ENCODE measurements at regions of chr20 and their contacts with region 1.

Region 1: DNA sequence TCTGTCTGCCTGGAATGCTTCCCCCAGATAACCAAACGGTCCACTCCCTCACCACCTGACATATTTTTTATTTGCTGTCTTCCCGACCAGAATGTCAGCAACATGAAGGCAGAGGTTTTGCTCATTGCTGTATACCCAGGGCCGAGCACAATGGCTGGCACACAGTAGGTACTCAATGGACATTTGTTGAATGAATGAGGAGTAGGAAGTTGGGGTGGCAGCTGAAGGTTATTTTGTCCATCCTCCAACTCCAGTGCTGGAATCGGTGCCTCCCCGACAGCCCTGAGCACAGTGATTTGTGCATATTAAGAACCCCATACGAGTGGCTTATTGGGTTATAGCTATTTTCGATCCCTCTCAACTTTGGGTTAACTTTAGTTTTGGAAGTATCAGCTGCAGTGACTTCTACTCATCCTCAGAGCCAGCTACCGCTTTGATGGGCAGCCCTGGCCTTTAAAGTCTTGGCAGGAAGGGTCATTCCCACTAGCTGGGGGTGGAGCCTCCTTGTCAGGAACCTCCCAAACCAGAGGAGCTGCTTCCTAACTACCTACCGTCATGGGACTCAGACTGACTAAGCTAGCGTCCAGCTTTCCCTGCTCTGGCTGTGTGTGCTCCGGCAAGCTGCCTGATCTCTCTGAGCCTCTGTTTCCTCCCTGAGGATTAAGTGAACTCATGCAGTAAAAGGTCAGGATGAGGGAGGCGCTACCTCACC is 10.2 kb downstream of the DUSP15 start:
- DNase-seq: no peak

Region 2: DNA sequence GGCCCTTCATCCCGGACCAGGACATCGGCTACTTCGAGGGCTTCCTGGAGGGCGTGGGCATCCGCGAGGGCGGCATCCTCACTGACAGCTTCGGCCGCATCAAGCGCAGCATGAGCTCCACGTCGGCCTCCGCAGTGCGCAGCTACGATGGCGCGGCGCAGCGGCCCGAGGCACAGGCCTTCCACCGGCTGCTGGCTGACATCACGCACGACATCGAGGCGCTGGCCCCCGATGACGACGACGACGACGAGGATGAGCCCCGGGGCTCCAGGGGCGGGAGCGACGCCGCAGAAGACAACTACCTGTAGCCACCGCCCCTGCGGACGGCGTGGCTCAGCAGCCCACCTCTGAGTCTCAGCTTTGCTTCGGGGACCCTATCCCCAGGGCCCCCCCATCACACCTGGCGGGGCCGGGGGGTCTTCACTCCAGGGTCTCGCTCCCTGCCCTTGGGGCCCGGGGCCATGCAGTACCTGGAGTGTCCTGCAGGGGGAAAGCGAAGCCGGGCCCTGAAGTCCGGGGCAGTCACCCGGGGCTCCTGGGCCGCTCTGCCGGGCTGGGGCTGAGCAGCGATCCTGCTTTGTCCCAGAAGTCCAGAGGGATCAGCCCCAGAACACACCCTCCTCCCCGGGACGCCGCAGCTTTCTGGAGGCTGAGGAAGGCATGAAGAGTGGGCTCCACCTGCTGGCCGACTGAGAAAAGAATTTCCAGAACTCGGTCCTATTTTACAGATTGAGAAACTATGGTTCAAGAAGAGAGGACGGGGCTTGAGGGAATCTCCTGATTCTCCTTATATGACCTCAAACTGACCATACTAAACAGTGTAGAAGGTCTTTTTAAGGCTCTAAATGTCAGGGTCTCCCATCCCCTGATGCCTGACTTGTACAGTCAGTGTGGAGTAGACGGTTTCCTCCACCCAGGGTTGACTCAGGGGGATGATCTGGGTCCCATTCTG is 171.1 kb after region 1 on chr20:
- in situ Hi-C with region 1: loop called (anchors 10 kb)
- DNase-seq: peak; percentile 76

Measured in KBM-7 (cell line).